ENCODE measurements at regions of chr17 and their contacts with region 1.

Region 1: DNA sequence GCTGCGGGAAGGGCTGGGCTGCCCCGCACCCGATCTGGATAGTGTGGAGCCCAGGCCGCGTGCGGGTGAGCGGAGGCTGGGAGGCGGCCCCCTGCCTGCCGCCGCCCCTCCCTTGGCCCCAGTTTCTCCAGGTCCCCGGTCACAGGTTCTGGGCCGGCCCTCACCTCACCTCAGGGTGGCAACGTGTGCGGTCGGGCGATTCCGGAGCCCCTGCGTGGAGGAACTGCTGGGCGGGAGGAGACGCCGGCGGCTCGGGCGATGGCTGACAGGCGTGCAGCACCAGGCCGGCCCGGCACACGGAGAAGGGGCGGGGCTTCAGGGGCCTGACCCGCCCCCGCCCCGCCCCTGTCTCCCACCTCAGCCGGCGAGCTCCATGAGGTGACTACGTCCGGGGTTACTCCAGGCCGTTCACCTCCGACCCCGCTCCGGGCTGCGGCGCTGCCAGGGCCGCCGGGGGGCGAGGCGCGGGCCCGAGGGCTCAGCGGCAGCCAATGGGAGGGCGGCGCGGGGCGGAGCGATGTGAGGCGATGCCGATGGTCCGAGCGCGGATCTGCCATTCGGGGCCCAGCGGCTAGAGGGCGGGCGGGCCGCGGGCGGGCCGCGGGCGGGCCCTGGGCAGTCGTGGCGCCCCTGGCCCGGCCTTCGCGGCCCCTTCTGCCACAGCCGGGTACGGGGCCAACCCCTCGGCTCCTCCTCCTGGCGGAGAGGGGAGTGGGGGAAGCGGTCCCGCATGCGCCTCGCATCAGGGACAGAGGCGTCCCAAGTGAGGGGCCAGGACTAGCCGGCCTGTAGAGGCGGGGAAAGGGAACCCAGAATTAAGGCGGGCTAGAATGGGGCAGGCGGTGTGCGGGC is 16.7 kb upstream of the C17orf78 start:
- DNase-seq: peak; percentile 93
- ATAC-seq: peak; percentile 97
- H3K4me3 Mint-ChIP-seq: peak overlapping the region; percentile 81
- H3K27ac Mint-ChIP-seq: peak overlapping the region; percentile 67
- H3K4me1 Mint-ChIP-seq: peaks cover 18% of the 10 kb centered on the region
- H3K27me3 Mint-ChIP-seq: no peaks in the 10 kb centered on the region
- CTCF ChIP-seq: no peak

Region 2: GRCh38 chr17:37339321-37339720 is 19.7 kb before region 1 on chr17:
- CTCF ChIA-PET with region 1: no interaction called
- POLR2A ChIA-PET with region 1: no interaction called
- intact Hi-C with region 1: no loop called
- DNase-seq: no peak
- ATAC-seq: no peak
- H3K4me3 Mint-ChIP-seq: no peak overlapping the region
- H3K27ac Mint-ChIP-seq: no peak overlapping the region
- H3K4me1 Mint-ChIP-seq: no peaks in the 10 kb centered on the region
- H3K27me3 Mint-ChIP-seq: no peaks in the 10 kb centered on the region
- CTCF ChIP-seq: no peak

Region 3: DNA sequence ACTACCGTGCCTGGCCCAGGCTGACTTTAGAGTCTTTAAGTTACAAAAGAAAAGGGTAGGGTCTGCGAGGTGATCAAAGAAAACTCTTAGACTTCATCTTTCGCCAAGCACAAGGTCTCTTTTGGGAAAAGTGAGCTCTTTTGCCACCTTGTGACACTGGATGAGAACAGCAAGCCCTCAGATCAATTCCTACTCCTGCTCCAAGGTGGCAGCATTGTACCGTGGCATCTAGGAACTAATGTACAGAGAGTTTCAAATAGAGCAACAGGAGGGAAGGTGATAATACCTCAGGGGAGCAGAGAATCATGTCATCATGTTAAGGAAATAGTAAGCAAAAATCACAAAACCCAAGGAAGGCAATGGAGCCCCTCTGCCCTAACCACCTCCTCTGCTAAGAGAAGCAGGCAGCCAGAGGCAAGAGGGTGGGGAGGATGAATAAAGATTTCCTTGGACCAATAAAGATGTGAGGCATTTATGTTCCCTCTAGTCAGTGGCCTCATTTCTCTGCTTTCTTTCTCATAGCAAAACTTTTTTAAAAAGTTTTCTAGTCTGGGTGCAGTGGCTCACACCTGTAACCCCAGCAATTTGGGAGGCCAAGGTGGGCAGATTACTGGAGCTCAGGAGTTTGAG is 14.6 kb after region 1 on chr17:
- CTCF ChIA-PET with region 1: interaction called, 12 read pairs
- POLR2A ChIA-PET with region 1: interaction called, 5 read pairs
- intact Hi-C with region 1: no loop called
- DNase-seq: peak; percentile 22
- ATAC-seq: peak; percentile 92
- H3K4me3 Mint-ChIP-seq: no peak overlapping the region
- H3K27ac Mint-ChIP-seq: no peak overlapping the region
- H3K4me1 Mint-ChIP-seq: peaks cover 4% of the 10 kb centered on the region
- H3K27me3 Mint-ChIP-seq: no peaks in the 10 kb centered on the region
- CTCF ChIP-seq: no peak

Region 4: DNA sequence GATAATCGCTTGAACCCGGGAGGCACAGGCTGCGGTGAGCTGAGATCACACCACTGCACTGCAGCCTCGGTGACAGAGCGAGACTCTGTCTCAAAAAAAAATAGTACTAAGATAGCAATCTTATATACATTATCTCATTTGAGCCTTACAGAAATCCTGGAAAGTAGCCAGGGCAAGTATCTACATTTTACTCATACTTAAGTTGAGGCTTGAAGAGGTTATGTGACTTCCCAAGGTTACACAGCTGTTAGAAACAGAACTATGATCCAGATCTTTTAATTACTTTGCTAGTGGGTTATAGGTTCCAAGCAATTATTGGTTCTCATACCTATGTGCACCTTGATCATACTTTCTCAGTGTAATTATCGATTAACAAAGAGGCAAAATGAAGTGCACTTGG is 32.1 kb after region 1 on chr17:
- CTCF ChIA-PET with region 1: no interaction called
- POLR2A ChIA-PET with region 1: no interaction called
- intact Hi-C with region 1: no loop called
- DNase-seq: no peak
- ATAC-seq: no peak
- H3K4me3 Mint-ChIP-seq: no peak overlapping the region
- H3K27ac Mint-ChIP-seq: no peak overlapping the region
- H3K4me1 Mint-ChIP-seq: peaks cover 7% of the 10 kb centered on the region
- H3K27me3 Mint-ChIP-seq: no peaks in the 10 kb centered on the region
- CTCF ChIP-seq: no peak

Region 5: DNA sequence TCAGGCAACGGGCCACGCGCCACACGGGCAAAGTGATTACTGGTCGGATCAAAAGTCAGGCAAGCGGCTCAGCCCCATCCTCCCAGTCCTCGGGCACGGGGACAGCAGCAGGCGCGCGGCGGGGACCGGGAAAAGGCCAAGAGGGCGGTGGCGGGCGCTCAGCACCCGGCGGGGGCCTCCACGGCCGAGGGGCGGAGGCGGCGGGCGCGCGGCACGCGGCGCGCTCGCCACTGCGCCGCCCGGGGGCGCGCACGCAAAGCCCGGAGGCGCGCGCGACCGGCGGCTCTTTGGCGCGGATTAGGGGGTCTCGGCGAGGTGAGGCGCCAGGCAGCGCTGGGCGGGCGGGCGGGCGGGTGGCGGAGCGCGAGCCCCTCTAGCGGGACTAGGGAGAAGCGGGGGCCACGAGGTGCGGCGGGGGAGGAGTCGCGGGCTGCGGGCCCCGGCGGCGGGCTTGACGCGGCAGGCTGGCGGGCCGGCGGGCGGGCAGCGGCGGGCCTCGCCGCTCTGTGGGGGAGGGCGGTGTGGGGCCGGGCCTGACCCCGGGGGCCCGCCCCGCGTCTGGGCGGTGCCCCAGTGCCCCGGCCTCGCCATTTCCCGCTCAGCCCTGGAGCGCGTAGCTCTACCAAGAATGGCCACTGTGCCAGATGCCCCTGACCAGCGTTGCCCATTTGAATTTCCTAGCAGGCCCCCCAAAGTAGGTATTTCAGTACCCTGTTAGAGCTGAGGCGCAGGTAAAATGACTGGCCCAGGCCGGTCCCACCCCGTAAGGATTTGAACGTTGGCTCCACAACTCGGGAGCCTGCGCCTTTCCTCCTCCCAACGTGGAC is 47.8 kb after region 1 on chr17 and contains the starts of genes ACACA and TADA2A:
- CTCF ChIA-PET with region 1: no interaction called
- POLR2A ChIA-PET with region 1: interaction called, 5 read pairs
- intact Hi-C with region 1: loop called (anchors 1 kb)
- DNase-seq: peak; percentile 78
- ATAC-seq: peak; percentile 98
- H3K4me3 Mint-ChIP-seq: peak within 1 kb of the TSS; percentile 97
- H3K27ac Mint-ChIP-seq: peak within 1 kb of the TSS; percentile 92
- H3K4me1 Mint-ChIP-seq: peaks cover 36% of the 10 kb centered on the region
- H3K27me3 Mint-ChIP-seq: no peaks in the 10 kb centered on the region
- CTCF ChIP-seq: no peak
- total RNA-seq, gene ACACA: 32.4 and 42.4 TPM in 2 replicates
- total RNA-seq, gene TADA2A: 35.6 and 42.0 TPM in 2 replicates

Region 6: GRCh38 chr17:37530420-37530819 is 171.4 kb after region 1 on chr17:
- CTCF ChIA-PET with region 1: no interaction called
- POLR2A ChIA-PET with region 1: no interaction called
- intact Hi-C with region 1: no loop called
- DNase-seq: no peak
- ATAC-seq: no peak
- H3K4me3 Mint-ChIP-seq: no peak overlapping the region
- H3K27ac Mint-ChIP-seq: no peak overlapping the region
- H3K4me1 Mint-ChIP-seq: no peaks in the 10 kb centered on the region
- H3K27me3 Mint-ChIP-seq: no peaks in the 10 kb centered on the region
- CTCF ChIP-seq: no peak

Region 7: GRCh38 chr17:37609170-37610040 is 250.3 kb after region 1 on chr17 and contains the start of gene SYNRG:
- CTCF ChIA-PET with region 1: no interaction called
- POLR2A ChIA-PET with region 1: interaction called, 6 read pairs
- intact Hi-C with region 1: loop called (anchors 2 kb)
- DNase-seq: peak; percentile 98
- ATAC-seq: peak; percentile 85
- H3K4me3 Mint-ChIP-seq: peak within 1 kb of the TSS; percentile 94
- H3K27ac Mint-ChIP-seq: peak within 1 kb of the TSS; percentile 92
- H3K4me1 Mint-ChIP-seq: peaks cover 42% of the 10 kb centered on the region
- H3K27me3 Mint-ChIP-seq: no peaks in the 10 kb centered on the region
- CTCF ChIP-seq: no peak
- total RNA-seq, gene SYNRG: 83.7 and 89.8 TPM in 2 replicates

Measured in activated B cell treated with CpG ODN at 0.5 μM for 24 hours (primary cell).